Common myeloid progenitor, CD34-positive (primary cell): ENCODE measurements at regions of chr2 and their contacts with region 1.

Region 1: DNA sequence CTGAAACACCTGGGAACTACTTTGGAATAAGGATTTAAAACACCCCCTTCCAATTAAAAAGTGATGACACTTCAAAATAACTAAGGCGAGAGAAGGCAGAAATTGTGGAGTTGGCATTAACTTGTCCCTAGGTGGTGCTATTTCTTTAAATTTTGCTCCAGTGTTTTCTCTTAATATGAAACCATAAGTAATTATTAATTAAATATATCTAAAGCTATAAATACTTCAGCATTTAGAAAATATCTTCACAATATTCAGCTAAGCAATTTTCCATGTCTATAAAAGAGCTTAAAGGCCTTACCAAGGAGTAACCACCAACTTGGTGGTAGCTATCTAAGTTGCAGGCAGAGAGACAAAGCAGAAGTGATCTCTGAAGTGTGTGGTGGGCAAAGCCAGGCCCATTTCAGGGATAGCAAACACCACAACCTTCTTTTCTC is 186.8 kb upstream of the PGAP1 start:
- DNase-seq: peak; percentile 44 to 87 (median 82)
- H3K4me3 ChIP-seq: no peak overlapping the region
- H3K27ac ChIP-seq: no peak overlapping the region
- H3K4me1 ChIP-seq: peaks cover 0 to 5% (median 0%) of the 10 kb centered on the region in 4 experiments
- H3K27me3 ChIP-seq: no peaks in the 10 kb centered on the region

Region 2: DNA sequence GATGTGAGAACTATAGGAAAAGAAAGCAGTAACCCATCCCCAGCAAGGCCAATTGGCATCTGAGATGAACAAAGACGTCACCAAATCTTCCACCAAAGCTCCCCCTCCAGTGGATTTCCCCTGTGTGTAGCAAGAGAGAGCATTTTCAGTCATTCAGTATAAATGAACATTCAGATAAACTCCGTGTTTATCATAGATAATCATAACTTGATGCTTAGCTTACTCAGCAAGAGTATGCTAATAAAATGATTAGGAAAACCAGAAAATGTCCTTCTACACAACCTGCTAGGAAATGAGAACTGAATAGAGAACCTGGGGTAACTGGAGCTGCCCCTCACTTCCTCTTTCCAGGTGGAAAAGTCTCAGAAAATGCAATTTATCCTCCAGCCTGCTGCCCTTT is 671.8 kb before region 1 on chr2:
- CTCF ChIA-PET with region 1: no interaction called
- POLR2A ChIA-PET with region 1: no interaction called
- DNase-seq: no peak
- H3K4me3 ChIP-seq: no peak overlapping the region
- H3K27ac ChIP-seq: no peak overlapping the region
- H3K4me1 ChIP-seq: no peaks in the 10 kb centered on the region
- H3K27me3 ChIP-seq: peaks cover 0 to 5% (median 0%) of the 10 kb centered on the region in 5 experiments

Region 3: GRCh38 chr2:197130318-197130717 is 17.0 kb after region 1 on chr2:
- CTCF ChIA-PET with region 1: interaction called, 20 read pairs
- POLR2A ChIA-PET with region 1: no interaction called
- DNase-seq: peak; percentile 11 to 52 (median 47)
- H3K4me3 ChIP-seq: no peak overlapping the region
- H3K27ac ChIP-seq: peak overlapping the region in 1 of 2 experiments; percentile 38
- H3K4me1 ChIP-seq: peaks cover 0 to 14% (median 3%) of the 10 kb centered on the region in 4 experiments
- H3K27me3 ChIP-seq: no peaks in the 10 kb centered on the region

Region 4: GRCh38 chr2:197168705-197169104 is 55.4 kb after region 1 on chr2:
- CTCF ChIA-PET with region 1: interaction called, 128 read pairs
- POLR2A ChIA-PET with region 1: no interaction called
- DNase-seq: peak; percentile 71 to 84 (median 80)
- H3K4me3 ChIP-seq: no peak overlapping the region
- H3K27ac ChIP-seq: no peak overlapping the region
- H3K4me1 ChIP-seq: peaks cover 2 to 7% (median 4%) of the 10 kb centered on the region in 4 experiments
- H3K27me3 ChIP-seq: no peaks in the 10 kb centered on the region

Region 5: DNA sequence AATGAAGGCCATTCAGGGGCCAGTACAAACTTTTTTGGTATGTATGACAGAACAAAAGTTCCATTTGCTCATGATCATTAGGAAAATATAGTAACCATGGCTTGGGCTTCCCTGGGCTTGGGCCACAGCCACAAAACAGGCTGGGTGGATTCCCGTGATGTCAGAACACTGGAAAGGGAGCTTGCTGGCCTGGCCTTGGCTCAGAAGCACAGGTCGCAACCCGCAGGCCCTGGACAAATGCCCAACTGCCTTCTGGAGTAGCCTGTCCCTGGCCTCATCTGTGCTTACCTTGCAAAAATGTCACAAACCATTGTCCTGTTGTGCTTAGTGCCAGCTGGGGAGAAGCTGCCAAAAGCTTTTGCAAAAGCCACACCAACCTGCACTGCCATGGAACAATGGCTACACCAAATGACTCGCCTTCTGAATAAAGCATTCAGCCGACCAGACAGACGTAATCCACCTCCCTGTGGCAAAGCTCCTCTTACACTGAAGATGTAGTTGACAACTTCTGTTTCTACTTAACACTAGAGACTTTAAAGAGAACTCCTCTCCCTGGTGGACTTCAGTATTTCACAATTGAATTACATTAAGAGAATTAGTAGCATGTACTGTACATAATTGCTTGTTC is 71.8 kb after region 1 on chr2:
- CTCF ChIA-PET with region 1: interaction called, 13 read pairs
- POLR2A ChIA-PET with region 1: no interaction called
- DNase-seq: no peak
- H3K4me3 ChIP-seq: no peak overlapping the region
- H3K27ac ChIP-seq: no peak overlapping the region
- H3K4me1 ChIP-seq: no peaks in the 10 kb centered on the region
- H3K27me3 ChIP-seq: no peaks in the 10 kb centered on the region

Region 6: DNA sequence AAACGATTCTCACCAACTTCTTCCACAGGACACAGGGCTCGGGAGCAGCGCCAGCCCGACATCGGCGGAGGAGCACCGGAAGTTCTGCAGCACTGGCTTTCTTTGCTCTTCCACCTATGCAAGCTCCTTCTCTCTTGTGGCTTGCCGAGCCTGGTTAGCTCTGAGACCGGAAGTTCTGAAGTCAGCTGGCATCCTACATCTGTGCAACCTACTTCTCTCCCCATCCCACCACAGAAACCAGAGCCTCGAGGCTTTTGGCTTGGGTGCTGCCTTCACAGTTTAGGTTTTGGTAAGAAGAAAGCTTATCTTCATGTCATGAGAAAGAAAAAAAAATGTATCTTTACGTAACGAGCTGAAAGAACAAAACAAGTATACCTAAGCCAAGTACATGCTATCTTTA is 85.6 kb after region 1 on chr2:
- CTCF ChIA-PET with region 1: interaction called, 19 read pairs
- POLR2A ChIA-PET with region 1: no interaction called
- DNase-seq: peak; percentile 96 to 99 (median 99)
- H3K4me3 ChIP-seq: peak overlapping the region; percentile 14 to 73 (median 51)
- H3K27ac ChIP-seq: peak overlapping the region; percentile 40 to 71
- H3K4me1 ChIP-seq: peaks cover 39 to 70% (median 59%) of the 10 kb centered on the region in 4 experiments
- H3K27me3 ChIP-seq: no peaks in the 10 kb centered on the region

Region 7: GRCh38 chr2:197359859-197360258 is 246.6 kb after region 1 on chr2:
- CTCF ChIA-PET with region 1: interaction called, 16 read pairs
- POLR2A ChIA-PET with region 1: no interaction called
- DNase-seq: no peak
- H3K4me3 ChIP-seq: no peak overlapping the region
- H3K27ac ChIP-seq: no peak overlapping the region
- H3K4me1 ChIP-seq: no peaks in the 10 kb centered on the region
- H3K27me3 ChIP-seq: no peaks in the 10 kb centered on the region

Region 8: DNA sequence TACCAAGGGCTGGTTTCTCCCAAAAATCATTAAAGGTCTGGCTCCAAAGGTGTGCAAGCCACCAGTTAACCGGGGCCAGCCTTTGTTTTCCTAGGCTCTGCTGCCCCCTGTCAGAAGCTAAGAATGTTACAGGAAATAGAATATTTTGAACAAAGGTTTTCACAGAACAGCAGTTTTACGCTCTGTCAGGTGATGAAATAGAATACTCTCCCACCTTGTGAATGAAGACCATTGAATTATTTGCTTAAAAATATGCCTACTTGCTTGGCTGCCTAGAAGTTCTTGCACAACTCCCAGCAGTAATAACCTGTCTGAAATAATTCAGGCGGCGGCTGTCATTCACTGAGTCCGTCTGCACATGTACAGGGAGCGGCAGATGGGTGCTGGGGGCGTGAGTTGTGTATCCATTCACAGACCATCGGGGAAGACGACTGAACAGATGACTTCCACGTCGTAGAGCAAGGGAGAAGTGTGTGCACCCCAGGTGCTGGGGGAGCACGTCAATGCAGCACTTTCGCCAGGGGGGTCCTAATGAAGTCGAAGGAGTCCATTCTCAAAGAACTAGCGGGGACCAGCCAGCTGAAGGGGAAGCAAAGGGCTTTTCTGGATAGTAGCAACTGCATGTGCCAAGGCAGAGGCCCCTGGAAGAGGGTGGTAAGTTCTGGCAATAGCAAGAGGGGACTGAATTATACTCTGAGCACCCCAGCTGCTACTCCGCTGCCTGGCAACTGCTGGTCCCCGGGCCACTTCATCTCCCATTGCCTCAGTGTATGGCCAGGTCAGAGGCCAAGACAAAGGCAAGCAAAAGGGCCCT is 265.4 kb after region 1 on chr2:
- CTCF ChIA-PET with region 1: interaction called, 26 read pairs
- POLR2A ChIA-PET with region 1: no interaction called
- DNase-seq: peak; percentile 46 to 61 (median 54)
- H3K4me3 ChIP-seq: no peak overlapping the region
- H3K27ac ChIP-seq: no peak overlapping the region
- H3K4me1 ChIP-seq: peaks cover 0 to 2% (median 0%) of the 10 kb centered on the region in 4 experiments
- H3K27me3 ChIP-seq: no peaks in the 10 kb centered on the region